PC-3 (cell line): ENCODE measurements at regions of chr1 and their contacts with region 1.

Region 1: DNA sequence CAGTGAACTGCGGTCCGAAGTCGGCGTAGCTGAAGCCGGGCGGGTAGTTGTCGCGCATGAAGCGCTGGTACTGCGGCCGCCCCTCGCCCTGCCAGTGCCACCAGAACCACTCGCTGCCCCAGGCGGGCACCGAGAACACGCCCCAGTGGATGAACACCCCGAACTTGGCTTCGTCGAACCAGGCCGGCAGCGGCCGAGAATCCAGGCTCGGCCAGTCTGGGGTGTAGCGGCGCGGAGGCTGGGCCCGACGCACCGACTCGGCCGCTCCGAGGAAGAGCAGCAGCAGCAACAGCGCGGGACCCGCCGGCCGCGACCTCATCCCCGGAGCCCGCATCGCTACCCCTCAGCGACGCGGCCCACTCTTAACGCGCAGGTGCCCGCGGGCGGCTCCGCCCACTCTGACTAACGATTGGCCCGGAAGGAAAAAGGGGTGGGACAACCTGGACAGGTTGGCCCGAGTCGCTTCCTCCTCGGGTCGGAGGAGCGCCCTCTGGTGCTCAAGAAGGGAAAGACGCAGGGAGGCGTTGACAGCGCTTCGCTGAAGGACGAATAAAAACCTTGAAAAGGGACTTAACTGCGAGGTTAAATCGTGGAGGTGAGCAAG is at the start of gene FUCA1:
- DNase-seq: peak; percentile 98
- ATAC-seq: peak; percentile 90
- H3K4me3 ChIP-seq: peak within 1 kb of the TSS; percentile 82
- H3K27ac ChIP-seq: no peak within 1 kb of the TSS
- H3K4me1 ChIP-seq: peaks cover 35% of the 10 kb centered on the region
- H3K27me3 ChIP-seq: no peaks in the 10 kb centered on the region
- CTCF ChIP-seq: peak; percentile 84
- total RNA-seq, gene FUCA1: 20.3 and 23.4 TPM in 2 replicates

Region 2: GRCh38 chr1:23809751-23810171 is 58.3 kb before region 1 on chr1:
- CTCF ChIA-PET with region 1: no interaction called
- POLR2A ChIA-PET with region 1: no interaction called
- intact Hi-C with region 1: loop called (anchors 1 kb)
- DNase-seq: peak; percentile 78
- ATAC-seq: peak; percentile 92
- H3K4me3 ChIP-seq: no peak overlapping the region
- H3K27ac ChIP-seq: no peak overlapping the region
- H3K4me1 ChIP-seq: 0 out of 2 replicates have a peak, but pooled peaks cover 5% of the 10 kb centered on the region
- H3K27me3 ChIP-seq: no peaks in the 10 kb centered on the region
- CTCF ChIP-seq: peak; percentile 81